Common myeloid progenitor, CD34-positive (primary cell): ENCODE measurements at regions of chr12 and their contacts with region 1.

Region 1: DNA sequence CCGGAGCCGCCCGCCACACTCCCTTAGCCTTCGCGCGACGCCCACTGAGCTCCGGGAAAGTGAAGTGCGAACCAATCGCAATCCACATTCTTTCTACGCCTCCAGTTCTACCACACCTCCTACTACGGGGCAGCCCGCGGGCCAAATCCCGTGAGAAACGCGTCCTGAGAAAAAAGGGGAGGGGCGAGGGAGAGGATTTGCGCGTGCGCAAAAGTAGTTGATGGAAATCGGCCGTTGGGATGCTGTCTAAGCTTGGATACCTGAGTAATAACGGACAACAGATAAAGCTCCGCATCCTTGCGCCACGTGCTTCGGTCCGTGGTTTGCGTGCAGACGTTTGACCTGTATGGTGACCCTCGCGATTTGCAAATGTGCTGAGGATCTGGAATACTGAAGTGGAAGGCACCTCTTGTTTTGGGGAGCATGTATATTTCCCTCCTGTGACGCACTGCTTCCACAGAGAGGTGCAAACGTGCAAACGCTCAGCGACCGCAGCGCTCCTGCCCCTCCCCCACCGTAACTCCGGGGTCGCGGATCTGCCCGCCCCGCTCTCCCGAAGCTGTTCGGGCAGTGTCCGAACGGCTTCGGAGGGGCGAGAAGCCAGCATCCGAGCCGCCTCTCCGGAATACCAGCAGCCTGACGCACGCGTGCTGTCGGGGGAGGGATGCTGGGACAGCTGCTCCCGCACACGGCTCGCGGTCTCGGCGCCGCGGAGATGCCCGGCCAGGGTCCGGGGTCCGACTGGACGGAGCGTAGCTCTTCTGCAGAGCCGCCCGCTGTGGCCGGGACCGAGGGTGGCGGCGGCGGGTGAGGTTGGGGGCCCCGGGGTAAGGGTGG is at the starts of genes FAM216A and GPN3:
- DNase-seq: peak; percentile 98 to 99 (median 98)
- H3K4me3 ChIP-seq: peak within 1 kb of the TSS; percentile 74 to 97 (median 90)
- H3K27ac ChIP-seq: peak within 1 kb of the TSS; percentile 87 to 93
- H3K4me1 ChIP-seq: peaks cover 5 to 36% (median 25%) of the 10 kb centered on the region in 4 experiments
- H3K27me3 ChIP-seq: no peaks in the 10 kb centered on the region

Region 2: DNA sequence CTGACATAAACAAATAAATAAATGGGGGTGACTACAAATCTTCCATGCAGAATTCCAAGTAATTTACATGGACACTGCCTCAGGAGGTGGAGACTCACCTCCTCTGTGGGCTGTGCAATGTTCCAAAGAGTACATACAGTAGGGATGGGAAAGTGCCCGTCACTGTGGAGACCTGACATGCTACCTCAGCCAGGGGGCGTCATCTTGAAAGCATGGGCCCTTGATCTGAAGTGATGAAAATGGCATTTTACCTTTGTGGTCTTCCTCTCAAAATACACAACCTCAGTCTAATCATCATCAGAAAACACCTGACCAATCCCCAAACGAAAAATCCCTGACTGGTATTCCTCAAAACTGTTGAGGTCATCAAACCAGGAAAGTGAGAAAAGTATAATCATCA is 113.4 kb before region 1 on chr12:
- CTCF ChIA-PET with region 1: no interaction called
- POLR2A ChIA-PET with region 1: no interaction called
- DNase-seq: peak; percentile 46 to 74 (median 63)
- H3K4me3 ChIP-seq: peak overlapping the region in 4 of 7 experiments; percentile 22 to 61 (median 26)
- H3K27ac ChIP-seq: peak overlapping the region in 1 of 2 experiments; percentile 44
- H3K4me1 ChIP-seq: peaks cover 24 to 50% (median 44%) of the 10 kb centered on the region in 4 experiments
- H3K27me3 ChIP-seq: no peaks in the 10 kb centered on the region

Region 3: GRCh38 chr12:110449799-110450497 is 18.5 kb before region 1 on chr12 and contains the start of gene ARPC3:
- CTCF ChIA-PET with region 1: interaction called, 200 read pairs
- POLR2A ChIA-PET with region 1: interaction called, 28 read pairs
- DNase-seq: peak; percentile 96 to 98 (median 97)
- H3K4me3 ChIP-seq: peak within 1 kb of the TSS; percentile 74 to 96 (median 89)
- H3K27ac ChIP-seq: peak within 1 kb of the TSS; percentile 98 to 99
- H3K4me1 ChIP-seq: peaks cover 5 to 36% (median 23%) of the 10 kb centered on the region in 4 experiments
- H3K27me3 ChIP-seq: no peaks in the 10 kb centered on the region